ENCODE measurements at regions of chr17 and their contacts with region 1.

Region 1: GRCh38 chr17:61519754-61520440 is 67.7 kb downstream of the TBX4 start:
- DNase-seq: no peak
- ATAC-seq: no peak
- H3K4me3 ChIP-seq: no peak overlapping the region
- H3K4me3 Mint-ChIP-seq: no peak overlapping the region
- H3K27ac ChIP-seq: no peak overlapping the region
- H3K27ac Mint-ChIP-seq: no peak overlapping the region
- H3K4me1 ChIP-seq: no peaks in the 10 kb centered on the region
- H3K4me1 Mint-ChIP-seq: no peaks in the 10 kb centered on the region
- H3K27me3 ChIP-seq: peaks cover 0 to 6% of the 10 kb centered on the region in 2 experiments
- H3K27me3 Mint-ChIP-seq: peaks cover 22 to 23% of the 10 kb centered on the region in 2 donors

Region 2: GRCh38 chr17:61499632-61500031 is 20.3 kb before region 1 on chr17:
- CTCF ChIA-PET with region 1: no interaction called
- POLR2A ChIA-PET with region 1: interaction called in 1 of 2 experiments, 15 read pairs
- DNase-seq: no peak
- ATAC-seq: no peak
- H3K4me3 ChIP-seq: no peak overlapping the region
- H3K4me3 Mint-ChIP-seq: no peak overlapping the region
- H3K27ac ChIP-seq: no peak overlapping the region
- H3K27ac Mint-ChIP-seq: no peak overlapping the region
- H3K4me1 ChIP-seq: no peaks in the 10 kb centered on the region
- H3K4me1 Mint-ChIP-seq: peaks cover 0 to 8% (median 0%) of the 10 kb centered on the region in 3 donors
- H3K27me3 ChIP-seq: peaks cover 2 to 16% of the 10 kb centered on the region in 2 experiments
- H3K27me3 Mint-ChIP-seq: peaks cover 13 to 20% of the 10 kb centered on the region in 2 donors

Measured in T-cell (primary cell).